Mucosa of descending colon (tissue), 3 donors: ENCODE measurements at regions of chr1 and their contacts with region 1.

Region 1: DNA sequence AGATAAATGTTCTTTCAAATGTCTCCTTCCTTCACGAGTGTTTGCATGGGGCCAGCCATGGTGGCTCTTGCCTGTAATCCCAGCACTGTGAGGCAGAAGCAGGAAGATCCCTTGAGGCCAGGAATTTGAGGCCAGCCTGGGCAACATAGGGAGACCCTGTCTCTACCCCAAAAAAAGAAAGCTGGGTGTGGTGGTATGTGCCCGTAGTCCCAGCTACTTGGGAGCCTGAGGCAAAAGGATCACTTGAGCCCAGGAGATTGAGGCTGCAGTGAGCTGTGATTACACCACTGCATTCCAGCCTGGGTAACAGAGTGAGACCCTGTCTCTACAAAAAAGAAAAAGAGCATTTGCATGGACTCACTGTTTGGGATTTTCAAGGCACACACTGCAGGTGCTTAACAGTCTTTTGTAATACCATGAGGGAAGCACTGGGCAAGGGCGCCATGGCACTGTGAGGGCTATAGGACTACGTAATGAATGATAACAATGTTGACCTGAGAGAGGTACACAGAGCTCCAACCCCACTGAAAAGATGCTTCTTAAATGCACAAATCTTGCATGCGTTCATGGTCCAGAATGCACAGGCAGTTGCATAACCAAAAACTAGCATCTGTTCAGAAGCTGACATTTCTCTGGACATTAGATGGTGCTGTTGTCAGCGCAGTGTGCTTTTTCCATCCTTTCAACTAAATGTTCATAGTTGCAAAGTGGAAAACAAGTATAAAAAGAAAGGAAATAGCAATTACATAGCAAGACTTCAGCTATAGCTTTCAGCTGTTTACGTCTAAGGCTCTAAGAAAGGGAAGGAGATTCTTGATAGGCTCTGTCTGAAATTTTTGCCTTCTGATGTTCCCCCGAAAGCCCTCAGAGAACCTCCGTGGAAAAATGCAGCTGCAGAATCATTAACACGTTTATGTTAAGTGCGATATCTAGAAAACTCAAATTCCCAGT is 7.8 kb upstream of the TARBP1 start:
- DNase-seq: peak in 1 of 3 donors; percentile 61
- ATAC-seq: peak; percentile 79
- H3K4me3 ChIP-seq: no peak overlapping the region
- H3K4me1 ChIP-seq: no peaks in the 10 kb centered on the region
- CTCF ChIP-seq: peak; percentile 18

Region 2: GRCh38 chr1:235093696-235094592 is 607.2 kb after region 1 on chr1:
- intact Hi-C with region 1: loop called in 1 of 2 experiments (anchors 5 kb)
- DNase-seq: peak; percentile 78 to 92 (median 90)
- ATAC-seq: peak; percentile 91
- H3K4me3 ChIP-seq: no peak overlapping the region
- H3K4me1 ChIP-seq: peaks cover 11% of the 10 kb centered on the region
- CTCF ChIP-seq: peak; percentile 94

Region 3: GRCh38 chr1:236021424-236022135 is 1534.8 kb after region 1 on chr1:
- intact Hi-C with region 1: no loop called
- DNase-seq: no peak
- ATAC-seq: no peak
- H3K4me3 ChIP-seq: no peak overlapping the region
- H3K4me1 ChIP-seq: no peaks in the 10 kb centered on the region
- CTCF ChIP-seq: no peak